PC-3 (cell line): ENCODE measurements at regions of chr1 and their contacts with region 1.

Region 1: GRCh38 chr1:78004719-78005447 is at the start of gene DNAJB4:
- DNase-seq: peak; percentile 95
- ATAC-seq: peak; percentile 95
- H3K4me3 ChIP-seq: peak within 1 kb of the TSS; percentile 84
- H3K27ac ChIP-seq: peak within 1 kb of the TSS; percentile 92
- H3K4me1 ChIP-seq: peaks cover 36% of the 10 kb centered on the region
- H3K27me3 ChIP-seq: no peaks in the 10 kb centered on the region
- CTCF ChIP-seq: no peak
- total RNA-seq, gene DNAJB4: 4.5 and 10.5 TPM in 2 replicates

Region 2: GRCh38 chr1:77697441-77697840 is 307.4 kb before region 1 on chr1:
- CTCF ChIA-PET with region 1: no interaction called
- POLR2A ChIA-PET with region 1: interaction called, 11 read pairs
- intact Hi-C with region 1: no loop called
- DNase-seq: no peak
- ATAC-seq: no peak
- H3K4me3 ChIP-seq: no peak overlapping the region
- H3K27ac ChIP-seq: no peak overlapping the region
- H3K4me1 ChIP-seq: no peaks in the 10 kb centered on the region
- H3K27me3 ChIP-seq: no peaks in the 10 kb centered on the region
- CTCF ChIP-seq: no peak

Region 3: DNA sequence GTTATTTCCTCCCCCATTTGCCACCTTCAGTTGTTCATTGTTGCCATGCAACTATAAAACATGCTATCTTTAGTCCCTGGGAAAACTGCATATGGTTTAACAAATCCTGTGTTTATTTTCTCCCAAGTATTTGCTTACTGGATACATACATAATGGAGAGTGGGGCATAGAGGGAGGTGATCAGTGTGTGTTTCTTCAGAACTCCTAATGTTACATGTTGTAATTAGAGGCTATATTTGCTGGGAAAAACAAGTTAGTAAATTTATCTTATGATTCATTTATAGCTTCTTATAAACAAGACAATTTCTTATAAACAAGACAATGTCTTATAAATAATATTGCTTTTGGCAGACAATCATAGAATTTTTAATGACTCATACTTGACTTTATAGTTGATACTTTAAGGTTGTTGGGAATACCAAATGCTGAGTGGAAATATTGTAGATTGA is 33.6 kb after region 1 on chr1:
- CTCF ChIA-PET with region 1: no interaction called
- POLR2A ChIA-PET with region 1: interaction called, 8 read pairs
- intact Hi-C with region 1: loop called (anchors 2 kb)
- DNase-seq: peak; percentile 79
- ATAC-seq: peak; percentile 85
- H3K4me3 ChIP-seq: no peak overlapping the region
- H3K27ac ChIP-seq: peak overlapping the region; percentile 74
- H3K4me1 ChIP-seq: peaks cover 13% of the 10 kb centered on the region
- H3K27me3 ChIP-seq: no peaks in the 10 kb centered on the region
- CTCF ChIP-seq: no peak

Region 4: DNA sequence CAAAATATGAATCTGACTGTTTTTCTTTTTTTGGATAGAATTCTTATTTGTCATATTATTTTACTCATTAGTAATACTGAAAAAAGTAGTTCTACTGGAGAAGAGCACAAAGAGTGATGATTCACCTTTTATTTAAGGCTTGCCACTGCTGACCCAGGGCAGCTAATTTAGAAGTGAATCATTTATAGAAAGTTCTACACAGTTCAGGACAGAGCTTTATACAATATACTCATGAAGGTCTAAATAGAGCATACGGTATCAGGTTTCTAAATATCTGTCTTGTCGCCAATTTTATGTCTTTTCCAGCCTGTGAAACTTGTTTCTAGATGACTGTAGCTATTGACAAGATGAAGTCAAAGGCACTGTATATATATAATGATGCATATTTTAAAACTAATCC is 65.9 kb after region 1 on chr1:
- CTCF ChIA-PET with region 1: interaction called, 5 read pairs
- POLR2A ChIA-PET with region 1: interaction called, 3 read pairs
- intact Hi-C with region 1: loop called (anchors 2 kb)
- DNase-seq: peak; percentile 96
- ATAC-seq: peak; percentile 99
- H3K4me3 ChIP-seq: no peak overlapping the region
- H3K27ac ChIP-seq: peak overlapping the region; percentile 90
- H3K4me1 ChIP-seq: peaks cover 36% of the 10 kb centered on the region
- H3K27me3 ChIP-seq: no peaks in the 10 kb centered on the region
- CTCF ChIP-seq: no peak

Region 5: DNA sequence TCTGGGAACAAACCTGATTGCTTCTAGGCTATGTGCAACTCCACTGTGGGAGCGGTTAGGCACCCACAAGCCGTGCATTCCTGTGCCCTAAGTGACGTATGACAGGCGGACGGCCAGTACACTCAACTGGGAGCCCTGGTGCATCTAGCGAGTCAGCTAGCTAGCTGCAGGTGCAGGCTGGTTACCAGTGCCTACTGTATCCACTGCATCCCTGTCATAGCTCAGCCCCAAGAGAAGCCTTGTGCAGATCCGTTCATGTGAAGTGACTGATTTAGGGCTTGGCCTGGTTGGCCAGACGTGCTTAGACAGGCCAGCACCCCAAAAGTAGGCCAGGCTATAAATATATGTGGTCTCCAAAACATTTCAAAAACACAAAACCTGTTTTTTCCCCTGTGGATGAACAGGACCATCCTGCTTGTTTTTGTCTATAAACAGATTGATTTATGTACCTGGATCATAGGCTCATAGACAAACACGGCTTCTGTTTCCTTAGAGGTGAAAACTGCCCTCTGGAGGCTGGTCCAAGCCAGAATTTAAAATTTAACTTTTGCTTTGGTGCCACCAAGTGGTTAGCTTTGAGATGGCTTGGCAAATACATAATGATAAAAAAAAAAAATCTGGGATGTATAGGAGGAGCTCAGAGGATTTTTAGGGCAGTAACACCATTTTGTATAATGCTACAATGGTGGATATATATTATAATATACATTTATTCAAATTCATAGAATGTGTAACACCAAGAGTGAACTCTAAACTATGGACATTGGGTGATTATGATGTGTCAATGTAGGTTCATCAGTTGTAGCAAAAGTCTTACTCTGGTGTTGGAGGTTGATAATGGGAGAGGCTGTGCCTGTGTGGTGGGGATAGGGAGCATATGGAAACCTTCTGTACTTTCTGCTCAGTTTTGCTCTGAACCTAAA is 109.4 kb after region 1 on chr1:
- CTCF ChIA-PET with region 1: interaction called, 22 read pairs
- POLR2A ChIA-PET with region 1: interaction called, 4 read pairs
- intact Hi-C with region 1: loop called (anchors 1 kb)
- DNase-seq: peak; percentile 91
- ATAC-seq: peak; percentile 76
- H3K4me3 ChIP-seq: no peak overlapping the region
- H3K27ac ChIP-seq: no peak overlapping the region
- H3K4me1 ChIP-seq: peaks cover 4% of the 10 kb centered on the region; the same call in 1 of the 2 replicates
- H3K27me3 ChIP-seq: no peaks in the 10 kb centered on the region
- CTCF ChIP-seq: peak; percentile 99